ENCODE measurements at regions of chr11 and their contacts with region 1.

Region 1: DNA sequence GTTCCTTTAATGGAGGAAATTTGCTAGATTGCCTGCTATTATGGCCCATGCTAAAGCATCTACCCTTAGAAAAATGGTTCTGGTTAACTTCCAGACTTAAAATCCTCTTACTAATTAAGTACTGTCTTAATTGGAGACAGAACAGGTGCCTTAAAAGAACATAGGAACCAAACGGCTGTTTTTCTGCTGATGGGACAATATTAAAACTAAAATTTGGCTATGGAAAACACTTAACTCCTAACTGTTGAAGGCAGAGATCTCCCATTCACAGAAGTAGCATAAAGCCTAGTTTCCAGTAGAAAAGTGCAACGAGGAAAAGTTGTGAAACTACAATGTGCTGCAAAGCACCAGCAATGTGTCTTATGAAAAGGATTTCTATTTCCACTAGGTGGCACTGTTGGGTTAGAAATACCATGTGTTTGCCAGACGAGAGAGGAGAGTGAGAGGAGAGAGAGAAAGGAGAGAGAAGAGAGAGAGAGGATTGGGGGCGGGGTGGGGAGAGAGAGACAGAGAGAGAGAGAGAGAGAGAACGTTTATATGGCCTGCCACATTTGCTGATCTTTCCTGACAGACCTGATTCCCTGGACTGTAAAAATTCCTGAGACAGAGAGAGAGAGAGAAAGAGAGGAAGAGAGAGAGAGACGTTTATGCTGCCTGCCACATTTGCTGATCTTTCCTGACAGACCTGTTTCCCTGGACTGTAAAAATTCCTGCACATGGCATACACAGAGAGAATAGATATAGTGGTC is 51.5 kb downstream of the FAM181B start:
- DNase-seq: peak; percentile 65
- ATAC-seq: peak; percentile 97
- H3K4me3 ChIP-seq: no peak overlapping the region
- H3K27ac ChIP-seq: no peak overlapping the region
- H3K4me1 ChIP-seq: no peaks in the 10 kb centered on the region
- H3K27me3 ChIP-seq: peaks cover 11% of the 10 kb centered on the region; the same call in 1 of the 2 replicates
- CTCF ChIP-seq: peak; percentile 46 to 77 (median 72); a peak in 5 of 6 replicates
- POLR2A ChIP-seq: no peak
- RAD21 ChIP-seq: peak; percentile 73

Region 2: GRCh38 chr11:81644239-81644840 is 1037.8 kb before region 1 on chr11:
- CTCF ChIA-PET with region 1: no interaction called
- POLR2A ChIA-PET with region 1: no interaction called
- RAD21 ChIA-PET with region 1: no interaction called
- intact Hi-C with region 1: loop called (anchors 5 kb)
- DNase-seq: peak; percentile 4
- ATAC-seq: peak; percentile 66
- H3K4me3 ChIP-seq: no peak overlapping the region
- H3K27ac ChIP-seq: no peak overlapping the region
- H3K4me1 ChIP-seq: no peaks in the 10 kb centered on the region
- H3K27me3 ChIP-seq: no peaks in the 10 kb centered on the region
- CTCF ChIP-seq: peak; percentile 40 to 56 (median 47); a peak in 4 of 6 replicates
- POLR2A ChIP-seq: no peak
- RAD21 ChIP-seq: peak; percentile 32; the same call in 1 of the 2 replicates

Region 3: DNA sequence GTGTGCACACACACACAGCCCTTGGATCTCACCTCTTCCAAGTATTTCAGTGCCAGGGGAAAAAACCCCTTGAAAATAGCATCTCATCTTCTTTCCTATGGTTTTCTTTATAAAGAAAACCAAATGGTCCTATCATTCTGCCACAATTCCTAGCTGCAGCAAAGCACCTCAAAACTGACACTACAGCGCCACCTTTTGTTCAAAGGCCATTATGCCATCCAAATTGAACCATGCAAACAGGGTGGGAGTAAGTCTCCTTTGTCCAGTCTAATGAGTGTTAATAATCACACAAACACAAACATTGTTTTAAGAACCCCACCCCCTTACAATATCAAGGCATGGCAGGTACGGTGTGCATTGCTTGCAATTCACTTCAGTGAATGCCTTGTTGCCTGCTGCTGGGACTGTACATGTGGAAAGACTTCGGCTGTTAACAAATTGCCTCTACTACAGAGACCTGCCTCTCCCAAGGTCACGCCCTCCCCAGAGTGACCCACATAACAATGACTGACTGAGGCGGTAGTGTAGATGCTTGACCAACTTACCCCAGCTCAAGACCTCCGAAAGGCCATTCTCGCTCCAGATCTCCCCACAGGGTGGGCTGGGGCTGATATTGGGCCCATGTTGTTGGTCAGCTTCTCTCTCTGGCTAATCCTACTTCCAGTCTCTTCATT is 19.8 kb after region 1 on chr11:
- CTCF ChIA-PET with region 1: interaction called, 41 read pairs
- POLR2A ChIA-PET with region 1: no interaction called
- RAD21 ChIA-PET with region 1: no interaction called
- intact Hi-C with region 1: no loop called
- DNase-seq: peak; percentile 24
- ATAC-seq: peak; percentile 79
- H3K4me3 ChIP-seq: no peak overlapping the region
- H3K27ac ChIP-seq: no peak overlapping the region
- H3K4me1 ChIP-seq: no peaks in the 10 kb centered on the region
- H3K27me3 ChIP-seq: 0 out of 2 replicates have a peak, but pooled peaks cover 4% of the 10 kb centered on the region
- CTCF ChIP-seq: peak; percentile 31 to 83 (median 74); a peak in 5 of 6 replicates
- POLR2A ChIP-seq: no peak
- RAD21 ChIP-seq: peak; percentile 50

Measured in HCT116 (cell line).